AG04449 (cell line): ENCODE measurements at regions of chr11 and their contacts with region 1.

Region 1: DNA sequence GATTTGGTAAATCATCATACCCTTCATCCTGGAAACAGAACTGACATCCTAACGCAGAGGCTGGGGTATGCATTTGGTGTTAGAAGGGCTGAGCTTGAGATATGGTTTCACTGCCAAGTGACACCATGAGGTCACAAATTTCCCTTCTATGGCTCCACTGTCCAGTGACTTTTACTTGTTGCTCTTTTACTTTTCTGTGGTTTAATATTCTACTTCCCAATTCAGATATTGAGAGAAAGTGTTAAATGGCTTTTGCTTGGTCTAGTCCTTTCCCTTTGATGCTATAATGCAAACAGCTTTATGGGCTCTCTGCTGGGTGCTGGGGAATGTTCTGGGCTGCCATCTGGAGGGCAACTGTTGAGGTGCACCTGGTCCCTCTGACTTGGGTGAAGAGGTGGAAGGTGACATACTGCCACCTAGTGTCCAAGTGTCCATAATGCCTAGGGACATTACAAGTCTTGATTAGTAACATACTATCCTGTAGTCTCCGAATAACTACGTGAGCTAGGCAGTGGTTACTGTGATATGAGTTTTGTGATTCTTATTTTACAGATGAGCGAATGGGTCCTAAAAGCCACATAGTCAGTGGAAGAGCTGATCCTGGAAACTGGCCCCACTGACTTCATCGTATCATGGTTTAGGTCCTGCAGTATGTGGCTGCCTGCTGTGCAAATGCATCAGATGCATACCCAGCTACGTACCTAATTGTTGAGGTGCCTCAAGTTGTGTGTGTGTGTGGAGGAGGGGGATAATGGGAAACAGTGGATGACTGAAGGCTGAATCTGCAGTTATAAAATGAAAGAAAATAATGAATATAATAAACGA is 149.1 kb upstream of the RAG2 start:
- DNase-seq: peak; percentile 77
- H3K4me3 ChIP-seq: no peak overlapping the region
- CTCF ChIP-seq: peak; percentile 98

Region 2: DNA sequence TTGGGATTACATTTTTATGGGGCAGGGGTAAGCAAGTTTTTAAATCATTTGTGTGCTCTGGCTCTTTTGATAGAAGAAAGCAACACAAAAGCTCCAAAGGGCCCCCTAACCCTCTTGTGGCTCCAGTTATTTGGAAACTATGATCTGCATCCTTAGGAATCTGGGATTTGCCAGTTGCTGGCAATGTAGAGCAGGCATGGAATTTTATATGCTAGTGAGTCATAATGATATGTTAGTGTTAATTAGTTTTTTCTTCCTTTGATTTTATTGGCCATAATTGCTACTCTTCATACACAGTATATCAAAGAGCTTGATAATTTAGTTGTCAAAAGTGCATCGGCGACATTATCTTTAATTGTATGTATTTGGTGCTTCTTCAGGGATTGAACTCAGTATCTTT is 169.2 kb before region 1 on chr11:
- CTCF ChIA-PET with region 1: interaction called, 10 read pairs
- POLR2A ChIA-PET with region 1: no interaction called
- DNase-seq: no peak
- H3K4me3 ChIP-seq: no peak overlapping the region
- CTCF ChIP-seq: no peak

Region 3: DNA sequence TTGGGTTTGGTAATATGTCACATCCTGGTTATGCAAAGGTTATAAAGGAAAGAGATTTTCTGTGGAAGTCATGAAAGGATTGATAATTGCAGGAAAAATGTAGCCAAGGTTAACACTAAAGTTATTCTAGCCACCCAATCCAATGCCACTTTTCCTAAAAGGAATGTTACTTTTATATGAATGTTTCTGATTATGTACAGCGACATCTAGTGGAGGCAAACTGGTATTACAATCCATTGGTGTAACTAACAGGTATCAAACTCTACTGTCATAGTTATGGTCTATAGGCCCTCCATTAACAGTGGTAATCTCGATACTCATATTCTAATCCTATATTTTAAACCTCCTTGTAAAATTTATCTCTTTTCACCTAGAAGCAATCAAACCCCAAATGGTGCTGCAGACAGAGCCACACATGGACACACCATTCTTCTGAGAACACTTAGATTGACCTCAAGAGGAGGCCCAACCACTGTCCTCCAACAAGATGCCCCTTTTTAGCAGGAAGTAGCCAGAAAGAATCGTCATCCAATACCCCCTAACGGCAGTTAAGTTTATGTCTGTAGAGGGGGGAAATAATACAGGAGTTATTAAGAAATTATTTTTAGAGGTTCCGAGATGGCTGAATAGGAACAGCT is 74.2 kb before region 1 on chr11:
- CTCF ChIA-PET with region 1: interaction called, 21 read pairs
- POLR2A ChIA-PET with region 1: no interaction called
- DNase-seq: peak; percentile 7
- H3K4me3 ChIP-seq: no peak overlapping the region
- CTCF ChIP-seq: peak; percentile 52

Region 4: DNA sequence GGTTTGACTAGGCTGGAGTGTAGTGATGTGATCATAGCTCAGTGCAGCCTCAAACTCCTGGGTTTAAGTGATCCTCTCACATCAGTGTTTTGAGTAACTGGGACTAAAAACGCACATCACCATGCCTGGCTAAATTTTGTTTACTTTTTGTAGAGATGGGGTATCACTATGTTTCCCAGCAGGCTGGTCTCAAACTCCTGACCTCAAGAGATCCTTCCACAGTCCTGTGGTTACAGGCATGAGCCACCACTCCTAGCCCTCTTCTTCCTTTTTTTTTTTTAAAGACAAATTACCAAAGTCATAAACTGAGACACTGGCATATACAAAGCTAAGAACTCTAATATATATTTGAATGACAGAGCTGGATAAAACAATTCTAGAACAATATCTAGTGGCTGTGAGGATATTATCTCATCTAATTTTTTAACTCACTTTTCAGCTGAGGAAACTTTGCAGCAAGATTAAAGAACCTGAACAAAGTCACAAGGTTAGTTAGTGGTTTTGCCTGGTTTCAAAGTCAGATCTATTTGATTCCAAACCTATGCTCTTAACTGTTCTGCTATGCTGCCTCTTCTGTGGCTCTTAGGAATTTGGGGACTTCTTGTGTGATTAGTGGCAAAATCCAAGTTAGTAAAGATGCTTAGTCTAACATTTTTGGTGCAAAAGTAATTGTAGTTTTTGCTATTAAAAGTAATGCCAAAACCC is 53.8 kb before region 1 on chr11:
- CTCF ChIA-PET with region 1: interaction called, 18 read pairs
- POLR2A ChIA-PET with region 1: no interaction called
- DNase-seq: no peak
- H3K4me3 ChIP-seq: no peak overlapping the region
- CTCF ChIP-seq: no peak

Region 5: DNA sequence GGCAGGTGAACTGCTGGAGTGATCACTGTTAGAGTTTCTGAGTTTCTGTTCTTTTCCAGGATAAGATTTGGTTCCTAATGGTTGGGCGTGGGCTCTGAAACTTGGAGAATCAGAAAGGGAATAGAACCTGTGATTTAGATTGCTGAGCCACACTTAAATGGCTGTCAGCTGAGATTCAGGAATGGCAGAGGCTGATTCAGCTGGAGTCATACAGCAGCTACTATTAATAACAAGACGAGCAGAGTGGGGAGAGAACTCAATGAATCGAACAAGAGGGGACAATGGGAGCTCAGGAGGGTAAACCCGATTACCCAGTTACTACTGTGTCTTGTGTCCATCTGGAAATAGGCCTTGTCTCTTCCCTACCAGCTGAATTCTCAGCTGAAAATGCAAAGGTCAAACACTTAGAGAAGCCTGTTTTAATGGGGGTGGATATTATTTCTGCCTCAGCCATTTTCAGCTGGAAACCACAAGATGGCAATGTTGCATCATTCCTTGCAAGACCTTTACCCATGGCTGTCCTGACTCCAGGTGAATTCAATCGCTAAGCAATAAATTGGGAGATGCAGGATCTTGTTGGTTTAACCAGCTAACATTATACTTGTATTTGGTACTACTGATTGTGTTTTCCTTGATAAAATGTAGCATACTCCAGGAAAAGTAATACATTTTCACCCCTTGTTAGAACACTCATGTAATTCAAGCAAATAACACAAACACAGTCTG is 44.6 kb before region 1 on chr11:
- CTCF ChIA-PET with region 1: interaction called, 264 read pairs
- POLR2A ChIA-PET with region 1: no interaction called
- DNase-seq: peak; percentile 4
- H3K4me3 ChIP-seq: no peak overlapping the region
- CTCF ChIP-seq: peak; percentile 75

Region 6: DNA sequence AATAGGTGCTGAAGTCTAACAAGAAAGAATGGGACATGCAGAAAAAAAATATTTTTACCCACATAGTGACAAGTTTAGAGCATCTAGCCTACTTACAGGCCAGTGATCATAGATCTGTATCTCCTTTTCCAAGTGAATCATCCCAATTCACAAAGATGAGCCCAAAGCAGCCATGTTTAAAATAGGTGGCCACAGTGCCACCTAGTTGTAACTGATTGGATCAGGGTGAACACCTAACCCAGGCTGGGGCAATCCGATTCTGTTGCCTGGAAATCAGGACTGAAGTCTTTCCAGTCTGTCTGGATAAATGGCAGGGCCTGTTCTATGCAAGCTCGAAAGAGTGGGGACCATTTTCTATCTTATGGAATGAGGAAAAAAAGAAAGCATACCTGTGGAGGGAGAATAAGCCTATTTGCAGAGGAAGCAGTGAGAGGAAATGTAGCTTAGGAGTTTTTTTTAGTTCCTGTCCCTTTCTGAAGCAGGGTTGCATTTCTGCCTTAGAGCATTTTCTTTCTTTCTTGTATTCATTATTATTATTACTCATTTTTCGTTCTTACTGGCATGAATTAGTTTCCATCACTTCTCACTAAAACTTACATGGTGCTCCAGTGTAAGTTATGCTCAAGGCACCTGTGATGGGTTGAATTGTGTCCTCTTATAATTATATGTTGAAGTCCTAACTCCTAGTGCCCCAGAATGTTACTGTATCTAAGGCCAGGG is 35.8 kb before region 1 on chr11:
- CTCF ChIA-PET with region 1: interaction called, 49 read pairs
- POLR2A ChIA-PET with region 1: no interaction called
- DNase-seq: no peak
- H3K4me3 ChIP-seq: no peak overlapping the region
- CTCF ChIP-seq: no peak

Region 7: DNA sequence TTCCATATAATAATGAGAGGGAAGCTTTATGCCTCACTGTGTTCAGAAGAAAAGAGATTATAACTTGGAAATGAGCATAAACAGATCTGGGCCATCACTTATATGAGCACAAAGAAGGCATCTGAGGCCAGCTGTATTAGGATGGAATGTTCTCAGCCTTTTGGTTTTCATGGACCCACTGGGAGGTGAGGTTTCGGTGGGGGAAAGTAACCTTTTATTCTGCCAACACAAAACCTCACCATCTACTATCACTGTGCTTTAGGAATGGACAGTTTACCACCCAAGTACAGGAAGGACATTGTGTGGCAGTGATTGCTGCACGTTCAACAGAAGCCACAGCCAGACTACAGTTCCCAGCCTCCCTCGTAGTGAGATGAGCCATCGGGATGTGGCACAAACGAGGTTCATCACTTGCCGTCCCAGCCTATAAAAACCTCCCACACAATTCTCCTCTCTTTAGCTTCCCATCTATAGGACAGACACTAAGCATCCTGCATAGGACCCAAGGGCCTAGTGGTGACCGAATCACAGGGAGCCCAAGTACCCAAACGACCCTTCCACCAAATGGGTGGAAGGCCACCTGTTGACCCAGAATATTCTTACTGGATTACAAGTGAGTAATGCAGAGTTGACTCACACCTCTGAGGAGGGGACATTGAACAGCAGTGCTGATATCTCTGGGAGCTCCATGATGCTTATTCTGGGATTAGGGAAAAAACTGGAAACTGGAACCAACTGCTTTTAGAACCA is 27.6 kb before region 1 on chr11:
- CTCF ChIA-PET with region 1: interaction called, 15 read pairs
- POLR2A ChIA-PET with region 1: no interaction called
- DNase-seq: no peak
- H3K4me3 ChIP-seq: no peak overlapping the region
- CTCF ChIP-seq: no peak